Activated CD4-positive, alpha-beta memory T cell treated with anti-CD3 and anti-CD28 coated beads for 36 hours (primary cell): ENCODE measurements at regions of chr16 and their contacts with region 1.

Region 1: GRCh38 chr16:28140788-28141618 is 70.8 kb downstream of the XPO6 start:
- DNase-seq: peak; percentile 84
- H3K4me3 Mint-ChIP-seq: peak overlapping the region; percentile 72
- H3K27ac Mint-ChIP-seq: peak overlapping the region; percentile 99
- H3K4me1 Mint-ChIP-seq: peaks cover 85% of the 10 kb centered on the region
- H3K27me3 Mint-ChIP-seq: no peaks in the 10 kb centered on the region

Region 2: DNA sequence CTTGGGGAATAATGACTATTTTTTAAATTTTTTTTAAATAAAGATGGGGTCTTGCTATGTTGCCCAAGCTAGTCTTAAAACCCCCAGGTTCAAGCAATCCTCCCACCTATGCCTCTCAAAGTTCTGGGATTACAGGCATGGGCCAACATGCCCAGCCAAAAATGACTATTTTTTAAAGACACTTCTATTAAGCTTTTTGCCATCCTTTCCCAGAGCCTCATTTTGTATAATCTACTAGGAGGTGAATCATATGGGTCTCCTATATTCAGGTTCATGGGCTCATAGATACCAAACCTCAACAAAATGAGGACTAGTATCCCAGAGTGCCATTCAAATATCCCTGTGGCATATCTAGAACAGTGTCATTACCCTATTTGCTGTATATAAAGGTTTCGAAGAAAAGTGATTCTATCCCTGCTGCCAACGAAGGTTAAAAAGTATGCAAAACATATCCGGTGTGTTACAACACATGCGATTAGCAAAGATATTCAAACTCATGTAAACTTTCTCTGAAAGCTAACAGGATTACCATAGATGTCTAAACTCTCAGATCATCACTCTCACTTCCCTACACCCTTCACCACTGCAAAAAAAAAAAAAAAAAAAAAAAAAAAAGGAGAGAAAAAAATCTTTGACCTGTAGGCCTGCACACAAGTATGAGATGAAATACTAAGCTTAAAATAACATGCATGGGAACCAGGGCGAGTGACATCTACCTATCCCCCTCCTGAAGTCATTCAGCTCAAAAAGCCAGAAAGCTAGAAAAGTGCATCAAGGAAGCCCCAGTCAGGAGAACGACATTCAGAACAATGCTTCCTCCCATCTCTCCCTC is 47.3 kb after region 1 on chr16:
- CTCF ChIA-PET with region 1: interaction called, 4 read pairs
- POLR2A ChIA-PET with region 1: interaction called, 6 read pairs
- intact Hi-C with region 1: loop called (anchors 1 kb)
- DNase-seq: no peak
- H3K4me3 Mint-ChIP-seq: peak overlapping the region; percentile 39
- H3K27ac Mint-ChIP-seq: peak overlapping the region; percentile 93
- H3K4me1 Mint-ChIP-seq: peaks cover 94% of the 10 kb centered on the region
- H3K27me3 Mint-ChIP-seq: no peaks in the 10 kb centered on the region

Region 3: GRCh38 chr16:28211712-28212534 is 70.9 kb after region 1 on chr16 and contains the start of gene XPO6:
- CTCF ChIA-PET with region 1: interaction called, 71 read pairs
- POLR2A ChIA-PET with region 1: interaction called, 9 read pairs
- intact Hi-C with region 1: loop called (anchors 1 kb)
- DNase-seq: peak; percentile 99
- H3K4me3 Mint-ChIP-seq: peak within 1 kb of the TSS; percentile 98
- H3K27ac Mint-ChIP-seq: peak within 1 kb of the TSS; percentile 95
- H3K4me1 Mint-ChIP-seq: peaks cover 27% of the 10 kb centered on the region
- H3K27me3 Mint-ChIP-seq: no peaks in the 10 kb centered on the region
- total RNA-seq, gene XPO6: 201 to 214 TPM

Region 4: DNA sequence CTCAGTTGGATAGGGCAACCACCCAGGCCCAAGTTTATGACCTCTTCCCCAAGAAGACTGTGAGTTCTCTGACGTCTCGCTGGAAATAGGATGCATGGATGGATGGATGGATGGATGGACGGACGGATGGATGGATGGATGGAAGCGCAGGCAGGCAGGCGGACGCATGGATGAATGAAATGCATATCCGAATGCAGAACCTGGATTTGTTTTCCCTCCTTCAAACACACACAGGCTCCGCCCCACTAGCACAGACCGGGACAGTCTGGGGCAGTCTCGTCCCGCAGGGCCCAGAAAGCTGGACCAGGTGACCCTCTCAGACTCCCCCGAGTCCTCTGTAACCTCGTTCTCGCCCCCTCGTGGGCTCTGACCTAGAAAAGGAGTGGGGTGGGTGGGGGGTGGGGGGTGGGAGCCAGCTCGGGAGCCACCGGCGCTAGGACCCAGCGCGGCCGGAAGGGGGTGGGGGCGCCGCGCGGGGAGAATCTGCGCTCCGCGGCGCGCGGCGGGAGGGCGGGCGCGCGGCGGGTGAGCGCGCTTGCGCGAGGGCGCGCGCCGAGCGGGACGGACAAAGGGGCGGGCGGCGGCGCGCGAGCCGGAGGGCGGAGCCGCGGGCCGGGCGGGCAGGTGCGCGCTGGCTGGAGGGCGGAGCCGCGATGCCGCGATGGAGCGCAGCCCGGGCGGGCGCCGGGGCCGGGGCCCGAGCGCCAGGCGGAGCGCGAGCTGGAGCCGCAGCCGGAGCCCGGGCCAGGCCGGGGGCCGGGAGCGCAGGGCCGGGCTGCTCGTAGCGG is 151.1 kb after region 1 on chr16 and contains the start of gene SBK1:
- CTCF ChIA-PET with region 1: no interaction called
- POLR2A ChIA-PET with region 1: no interaction called
- intact Hi-C with region 1: loop called (anchors 5 kb)
- DNase-seq: peak; percentile 85
- H3K4me3 Mint-ChIP-seq: peak within 1 kb of the TSS; percentile 82
- H3K27ac Mint-ChIP-seq: peak within 1 kb of the TSS; percentile 82
- H3K4me1 Mint-ChIP-seq: peaks cover 44% of the 10 kb centered on the region
- H3K27me3 Mint-ChIP-seq: no peaks in the 10 kb centered on the region
- total RNA-seq, gene SBK1: 2.9 to 3.8 TPM